Upper lobe of right lung (tissue), 1 donor: ENCODE measurements at regions of chr6 and their contacts with region 1.

Region 1: GRCh38 chr6:84227434-84228197 is at the start of gene CEP162:
- DNase-seq: peak; percentile 96
- ATAC-seq: peak; percentile 98
- H3K4me3 ChIP-seq: peak within 1 kb of the TSS; percentile 81
- H3K27ac ChIP-seq: peak within 1 kb of the TSS; percentile 87
- H3K4me1 ChIP-seq: peaks cover 11% of the 10 kb centered on the region
- H3K27me3 ChIP-seq: peaks cover 13% of the 10 kb centered on the region
- CTCF ChIP-seq: peak; percentile 70
- total RNA-seq, gene CEP162: 11.0 TPM

Region 2: DNA sequence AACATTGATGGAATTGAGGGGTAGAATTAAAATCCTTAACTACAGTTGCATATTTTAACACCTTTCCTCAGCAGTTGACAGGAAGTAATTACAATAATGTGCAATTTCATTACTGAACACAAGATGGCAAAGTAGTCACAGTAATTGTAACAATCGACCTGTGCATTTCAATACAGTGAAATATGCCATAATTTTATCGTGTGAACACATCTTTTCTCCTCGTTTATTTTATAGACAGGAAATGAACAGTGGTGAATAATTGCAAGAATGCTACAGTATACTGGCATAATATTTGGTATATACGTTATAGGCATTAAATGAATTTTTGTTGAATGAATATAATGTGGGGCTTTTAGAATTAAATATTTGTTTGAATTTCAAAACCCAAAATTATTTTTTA is 343.1 kb before region 1 on chr6:
- intact Hi-C with region 1: loop called (anchors 10 kb)
- DNase-seq: no peak
- ATAC-seq: peak; percentile 80
- H3K4me3 ChIP-seq: no peak overlapping the region
- H3K27ac ChIP-seq: no peak overlapping the region
- H3K4me1 ChIP-seq: no peaks in the 10 kb centered on the region
- H3K27me3 ChIP-seq: no peaks in the 10 kb centered on the region
- CTCF ChIP-seq: peak; percentile 70